Spleen (tissue), 13 donors: ENCODE measurements at regions of chr3 and their contacts with region 1.

Region 1: DNA sequence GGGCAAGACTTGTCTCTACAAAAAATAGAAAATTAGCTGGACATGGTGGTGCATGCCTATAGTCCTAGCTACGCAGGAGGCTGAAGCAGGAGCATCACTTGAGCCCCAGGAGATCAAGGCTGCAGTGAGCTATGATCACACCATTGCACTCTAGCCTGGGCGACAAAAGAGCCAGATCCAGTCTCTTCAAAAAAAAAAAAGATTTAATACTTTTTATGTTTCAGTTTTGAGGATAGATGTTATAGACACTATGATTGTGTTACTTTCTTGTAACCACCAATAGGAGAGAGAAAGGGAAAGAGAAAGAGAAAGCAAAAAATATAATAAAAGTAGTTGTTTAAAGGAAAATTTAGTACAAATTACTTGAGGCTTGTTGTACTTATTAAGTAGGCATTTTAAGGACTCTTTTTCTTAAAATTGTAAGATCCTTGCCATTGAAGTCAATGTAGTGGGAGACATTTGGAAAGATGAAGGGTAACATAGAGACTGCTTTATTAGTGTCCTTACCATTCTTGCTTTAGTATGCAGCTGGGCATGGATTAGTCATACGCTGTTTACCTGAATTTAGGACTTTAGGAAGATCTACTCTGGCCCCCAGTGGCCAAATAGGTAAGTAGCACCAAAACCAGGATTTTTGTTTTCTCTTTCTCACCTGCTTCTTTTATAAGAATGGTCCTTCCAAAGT is 35.1 kb upstream of the ZDHHC23 start:
- DNase-seq: no peak
- H3K4me3 ChIP-seq: peak overlapping the region in 1 of 8 donors; percentile 30
- H3K27ac ChIP-seq: peak overlapping the region in 3 of 8 donors; percentile 14 to 48 (median 31)
- H3K4me1 ChIP-seq: peaks cover 0 to 10% (median 3%) of the 10 kb centered on the region in 6 donors
- H3K27me3 ChIP-seq: no peaks in the 10 kb centered on the region
- CTCF ChIP-seq: peak in 9 of 11 experiments; percentile 23 to 68 (median 61)
- POLR2A ChIP-seq: no peak

Region 2: GRCh38 chr3:113097960-113098447 is 814.7 kb before region 1 on chr3:
- intact Hi-C with region 1: no loop called
- DNase-seq: no peak
- H3K4me3 ChIP-seq: no peak overlapping the region
- H3K27ac ChIP-seq: no peak overlapping the region
- H3K4me1 ChIP-seq: no peaks in the 10 kb centered on the region
- H3K27me3 ChIP-seq: no peaks in the 10 kb centered on the region
- CTCF ChIP-seq: no peak
- POLR2A ChIP-seq: no peak

Region 3: DNA sequence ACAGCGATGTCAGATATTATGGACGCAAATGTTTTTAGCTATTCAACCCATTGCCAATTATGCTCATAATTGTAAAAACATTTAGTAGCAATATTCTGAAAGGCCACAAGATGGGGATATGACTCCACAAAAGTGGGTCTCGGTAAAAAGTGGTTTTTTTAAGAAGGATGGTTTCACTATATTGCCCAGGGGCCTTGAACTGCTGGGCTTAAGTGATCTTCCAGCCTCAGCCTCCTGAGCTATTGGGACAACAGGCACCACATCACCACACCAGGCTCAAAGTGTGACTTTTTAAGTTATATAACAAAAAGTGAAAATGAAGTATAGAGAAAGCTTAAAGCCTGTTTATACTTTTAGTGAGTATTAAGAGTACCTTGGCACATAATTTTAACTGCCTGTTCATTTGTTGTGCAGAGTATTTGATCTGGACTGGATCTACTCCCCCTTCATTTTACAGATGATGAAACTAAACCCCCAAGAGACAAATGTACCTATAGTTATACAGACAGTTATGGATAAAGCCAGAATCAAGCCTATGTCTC is 176.1 kb before region 1 on chr3:
- intact Hi-C with region 1: loop called (anchors 10 kb)
- DNase-seq: no peak
- H3K4me3 ChIP-seq: no peak overlapping the region
- H3K27ac ChIP-seq: peak overlapping the region in 6 of 8 donors; percentile 23 to 56 (median 34)
- H3K4me1 ChIP-seq: peaks cover 7 to 91% (median 45%) of the 10 kb centered on the region in 6 donors
- H3K27me3 ChIP-seq: no peaks in the 10 kb centered on the region
- CTCF ChIP-seq: peak; percentile 51 to 84 (median 74)
- POLR2A ChIP-seq: no peak

Region 4: DNA sequence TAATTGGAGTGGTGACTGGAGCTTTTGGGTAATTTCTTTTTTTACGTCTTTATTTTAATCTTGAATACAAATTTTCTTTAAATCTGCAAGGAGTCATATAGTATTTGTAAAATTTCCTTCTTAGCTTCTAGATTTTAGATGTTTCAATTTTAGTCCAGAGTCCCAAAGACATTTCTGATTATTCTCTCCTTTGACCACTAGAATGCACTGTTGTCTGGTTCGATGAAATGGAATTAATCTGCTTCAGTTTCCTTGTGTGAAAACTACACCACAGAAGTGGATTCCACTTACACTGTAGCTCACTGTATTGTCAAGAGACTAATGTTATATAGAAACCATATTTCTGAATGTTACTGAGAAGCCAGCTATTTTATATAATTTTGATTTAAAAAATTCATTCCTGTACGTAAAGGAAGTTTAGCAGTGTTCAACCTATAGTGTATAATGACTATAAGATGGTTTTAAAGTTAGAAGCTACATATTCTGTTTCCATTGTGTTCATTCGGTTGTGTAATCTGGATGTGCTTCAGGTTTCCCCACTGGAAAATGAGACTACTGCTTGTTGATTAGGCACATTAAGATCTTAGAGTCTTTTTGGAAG is 68.0 kb before region 1 on chr3:
- intact Hi-C with region 1: loop called (anchors 10 kb)
- DNase-seq: no peak
- H3K4me3 ChIP-seq: no peak overlapping the region
- H3K27ac ChIP-seq: no peak overlapping the region
- H3K4me1 ChIP-seq: peaks cover 0 to 2% (median 0%) of the 10 kb centered on the region in 6 donors
- H3K27me3 ChIP-seq: no peaks in the 10 kb centered on the region
- CTCF ChIP-seq: peak in 10 of 11 experiments; percentile 15 to 63 (median 43)
- POLR2A ChIP-seq: no peak